Mucosa of descending colon (tissue), 3 donors: ENCODE measurements at regions of chr12 and their contacts with region 1.

Region 1: DNA sequence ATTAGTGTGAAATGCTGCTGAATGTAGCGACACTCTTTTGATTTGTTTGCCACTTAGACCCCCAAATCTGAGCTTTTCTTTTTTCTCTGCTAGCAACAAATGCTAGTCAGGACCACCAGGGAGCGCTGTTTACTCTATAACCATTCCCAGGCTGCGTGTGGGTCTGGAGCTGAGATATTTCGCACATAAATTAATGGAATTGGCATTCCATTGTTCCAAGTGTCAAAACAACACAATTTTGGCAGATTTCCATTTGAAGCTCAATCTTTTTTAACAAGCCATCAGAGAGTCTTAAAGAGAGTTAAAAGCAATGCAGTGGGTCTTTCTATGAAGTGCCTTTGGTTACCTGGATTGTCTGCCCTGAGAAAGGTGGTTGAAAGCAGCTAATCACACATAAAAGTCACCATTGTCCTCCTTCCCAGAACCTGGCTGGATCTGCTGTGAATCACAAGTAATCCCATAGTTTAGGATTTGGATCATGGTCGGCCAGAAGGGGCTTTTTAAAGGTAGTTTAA is 7.4 kb upstream of the TMEM132C start:
- DNase-seq: peak in 1 of 3 donors; percentile 26
- ATAC-seq: no peak
- H3K4me3 ChIP-seq: no peak overlapping the region
- H3K4me1 ChIP-seq: no peaks in the 10 kb centered on the region
- CTCF ChIP-seq: no peak

Region 2: GRCh38 chr12:128314611-128315010 is 55.0 kb after region 1 on chr12:
- intact Hi-C with region 1: loop called in 1 of 2 experiments (anchors 5 kb)
- DNase-seq: no peak
- ATAC-seq: no peak
- H3K4me3 ChIP-seq: no peak overlapping the region
- H3K4me1 ChIP-seq: no peaks in the 10 kb centered on the region
- CTCF ChIP-seq: no peak